ENCODE measurements at regions of chr12 and their contacts with region 1.

Region 1: GRCh38 chr12:10613349-10614055 is at the start of gene MAGOHB:
- DNase-seq: peak; percentile 97
- H3K4me3 ChIP-seq: peak within 1 kb of the TSS; percentile 74
- H3K27ac ChIP-seq: peak within 1 kb of the TSS; percentile 85
- H3K4me1 ChIP-seq: peaks cover 23% of the 10 kb centered on the region
- H3K27me3 ChIP-seq: peaks cover 3% of the 10 kb centered on the region
- CTCF ChIP-seq: no peak
- total RNA-seq, gene MAGOHB: 13.9 TPM

Region 2: DNA sequence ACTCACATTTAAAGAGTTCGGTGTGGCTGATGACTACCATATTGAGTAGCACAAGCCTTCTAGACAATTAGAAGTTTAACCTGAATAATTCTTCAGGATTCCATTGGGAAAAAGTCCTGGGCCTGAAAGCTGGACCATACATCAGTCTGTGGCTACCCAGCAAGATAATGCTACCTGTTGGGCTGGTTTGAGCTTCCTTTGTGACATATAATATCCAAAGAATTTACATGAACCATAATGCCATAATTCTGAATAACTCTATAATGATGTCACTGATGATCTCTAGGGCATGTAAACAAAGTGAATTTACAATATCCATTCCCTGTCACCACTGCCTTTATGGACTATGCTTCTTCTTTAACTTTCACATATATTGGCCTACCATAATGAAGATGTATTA is 113.4 kb after region 1 on chr12:
- intact Hi-C with region 1: no loop called
- DNase-seq: no peak
- H3K4me3 ChIP-seq: no peak overlapping the region
- H3K27ac ChIP-seq: no peak overlapping the region
- H3K4me1 ChIP-seq: peaks cover 18% of the 10 kb centered on the region
- H3K27me3 ChIP-seq: no peaks in the 10 kb centered on the region
- CTCF ChIP-seq: no peak

Region 3: DNA sequence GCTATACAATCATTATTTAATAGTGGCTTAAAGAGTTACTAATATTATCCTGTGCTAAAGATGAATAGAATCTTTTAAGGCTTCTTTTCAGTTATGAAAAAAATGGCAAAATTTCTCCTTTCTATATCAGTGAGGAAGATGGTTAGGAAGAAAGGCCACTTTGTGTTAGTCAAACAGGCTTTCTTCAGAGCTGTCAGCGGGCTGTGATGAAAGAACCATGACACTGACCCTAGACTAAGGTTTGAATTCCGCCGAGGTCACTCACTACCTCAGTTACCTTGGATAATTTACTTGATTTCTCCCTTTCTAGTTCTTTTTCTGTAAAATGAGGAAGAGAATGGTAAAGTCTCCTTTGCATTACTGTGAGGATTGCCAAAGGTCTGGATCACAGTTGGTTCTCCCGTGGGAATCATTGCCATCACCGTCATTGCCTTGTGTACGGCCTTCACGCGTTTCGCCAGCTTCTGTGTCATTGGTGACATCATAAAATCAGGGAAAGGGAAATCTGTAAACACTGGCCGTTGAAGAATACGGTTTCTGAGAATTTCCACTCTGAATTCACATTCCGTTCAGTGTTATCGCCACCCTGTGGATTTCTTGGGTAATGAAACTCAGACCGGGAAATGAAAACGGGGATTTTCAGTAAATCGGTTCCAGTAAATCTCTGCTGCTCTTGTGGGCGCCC is 136.3 kb after region 1 on chr12:
- intact Hi-C with region 1: loop called (anchors 5 kb)
- DNase-seq: peak; percentile 40
- H3K4me3 ChIP-seq: peak overlapping the region; percentile 59
- H3K27ac ChIP-seq: peak overlapping the region; percentile 32
- H3K4me1 ChIP-seq: peaks cover 12% of the 10 kb centered on the region
- H3K27me3 ChIP-seq: peaks cover 17% of the 10 kb centered on the region
- CTCF ChIP-seq: peak; percentile 96

Measured in left ventricle myocardium inferior (tissue), 1 donor.